ENCODE measurements at regions of chr11 and their contacts with region 1.

Region 1: DNA sequence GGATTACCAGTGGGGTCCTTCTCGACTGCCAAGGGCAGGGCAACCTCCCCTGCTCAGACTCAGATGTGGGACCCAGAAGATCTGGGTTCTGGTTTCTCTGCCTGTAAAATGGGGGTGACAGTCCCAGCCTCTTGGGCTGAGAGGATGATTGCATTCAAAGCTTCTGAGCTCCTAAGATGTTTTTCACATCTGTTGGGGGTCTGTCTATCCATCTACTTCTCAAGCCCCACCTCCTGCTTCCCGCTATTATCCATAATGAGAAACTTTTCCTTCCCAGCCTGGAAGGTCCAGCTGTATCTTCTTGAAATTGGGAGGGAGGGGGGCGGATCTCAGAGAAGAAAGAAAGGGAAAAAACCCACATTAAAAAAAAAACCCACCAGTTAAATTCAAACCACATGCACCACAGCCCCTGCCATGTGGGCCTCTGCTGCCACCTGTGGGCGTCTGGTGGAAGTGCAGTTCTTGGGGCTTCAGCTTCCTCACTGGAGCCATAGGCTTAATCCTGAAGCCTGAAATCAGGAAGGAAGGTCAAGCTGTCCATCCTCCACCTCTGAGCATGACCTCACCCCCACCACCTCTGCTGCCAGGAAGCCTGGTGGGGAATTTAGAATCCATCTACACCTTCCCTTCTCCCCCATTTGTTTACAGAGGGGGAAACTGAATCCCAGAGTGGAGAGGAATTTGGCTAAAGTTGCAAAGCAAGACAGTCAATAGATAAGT is 27.3 kb downstream of the ARHGEF17 start:
- DNase-seq: peak; percentile 81
- ATAC-seq: peak; percentile 83
- H3K4me3 Mint-ChIP-seq: no peak overlapping the region
- H3K27ac Mint-ChIP-seq: no peak overlapping the region
- H3K4me1 Mint-ChIP-seq: no peaks in the 10 kb centered on the region
- H3K27me3 Mint-ChIP-seq: no peaks in the 10 kb centered on the region
- CTCF ChIP-seq: peak; percentile 100

Region 2: GRCh38 chr11:73288873-73289707 is 46.3 kb before region 1 on chr11:
- CTCF ChIA-PET with region 1: interaction called, 35 read pairs
- POLR2A ChIA-PET with region 1: no interaction called
- intact Hi-C with region 1: no loop called
- DNase-seq: peak; percentile 70
- ATAC-seq: peak; percentile 92
- H3K4me3 Mint-ChIP-seq: no peak overlapping the region
- H3K27ac Mint-ChIP-seq: no peak overlapping the region
- H3K4me1 Mint-ChIP-seq: peaks cover 12% of the 10 kb centered on the region
- H3K27me3 Mint-ChIP-seq: no peaks in the 10 kb centered on the region
- CTCF ChIP-seq: peak; percentile 93

Region 3: GRCh38 chr11:73295231-73295995 is 40.0 kb before region 1 on chr11:
- CTCF ChIA-PET with region 1: interaction called, 35 read pairs
- POLR2A ChIA-PET with region 1: no interaction called
- intact Hi-C with region 1: loop called (anchors 5 kb)
- DNase-seq: peak; percentile 88
- ATAC-seq: peak; percentile 91
- H3K4me3 Mint-ChIP-seq: no peak overlapping the region
- H3K27ac Mint-ChIP-seq: no peak overlapping the region
- H3K4me1 Mint-ChIP-seq: peaks cover 2% of the 10 kb centered on the region
- H3K27me3 Mint-ChIP-seq: peaks cover 7% of the 10 kb centered on the region
- CTCF ChIP-seq: peak; percentile 86

Region 4: DNA sequence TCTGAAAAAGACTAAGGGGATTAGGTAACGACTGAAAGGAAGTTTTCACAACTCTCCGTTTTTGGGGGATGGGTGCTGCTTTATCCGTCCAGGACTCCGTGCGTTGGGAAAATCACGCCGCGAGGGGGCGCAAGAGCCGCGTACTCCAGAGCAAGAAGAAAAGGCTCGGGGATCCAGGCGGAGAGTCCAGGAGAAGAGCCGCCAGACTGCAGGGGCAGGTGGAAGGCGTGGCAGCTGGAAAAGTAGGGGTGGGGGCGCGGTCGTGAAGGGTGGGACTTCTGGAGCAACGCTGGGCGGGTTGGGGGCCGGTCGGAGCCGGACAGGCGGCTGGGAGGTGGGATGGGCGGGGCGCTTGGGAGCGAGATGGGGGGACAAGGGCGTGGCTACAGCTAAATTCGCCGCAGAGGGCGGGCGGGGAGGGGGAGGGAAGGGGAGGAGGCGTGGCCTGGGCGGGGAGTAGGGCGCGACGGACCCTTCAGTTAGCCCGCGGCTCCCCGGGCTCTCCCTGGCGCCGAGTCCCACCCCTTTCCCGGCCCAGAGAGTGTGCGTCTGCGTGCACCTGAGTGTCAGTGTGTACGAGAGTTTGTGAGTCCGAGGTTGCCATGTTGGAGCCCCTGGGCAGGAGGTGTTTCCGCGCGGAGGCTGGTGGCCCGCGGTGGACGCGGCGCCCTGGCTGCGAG is 27.9 kb before region 1 on chr11:
- CTCF ChIA-PET with region 1: interaction called, 123 read pairs
- POLR2A ChIA-PET with region 1: interaction called, 4 read pairs
- intact Hi-C with region 1: loop called (anchors 2 kb)
- DNase-seq: peak; percentile 97
- ATAC-seq: peak; percentile 81
- H3K4me3 Mint-ChIP-seq: peak overlapping the region; percentile 78
- H3K27ac Mint-ChIP-seq: no peak overlapping the region
- H3K4me1 Mint-ChIP-seq: peaks cover 6% of the 10 kb centered on the region
- H3K27me3 Mint-ChIP-seq: peaks cover 16% of the 10 kb centered on the region
- CTCF ChIP-seq: peak; percentile 62

Region 5: DNA sequence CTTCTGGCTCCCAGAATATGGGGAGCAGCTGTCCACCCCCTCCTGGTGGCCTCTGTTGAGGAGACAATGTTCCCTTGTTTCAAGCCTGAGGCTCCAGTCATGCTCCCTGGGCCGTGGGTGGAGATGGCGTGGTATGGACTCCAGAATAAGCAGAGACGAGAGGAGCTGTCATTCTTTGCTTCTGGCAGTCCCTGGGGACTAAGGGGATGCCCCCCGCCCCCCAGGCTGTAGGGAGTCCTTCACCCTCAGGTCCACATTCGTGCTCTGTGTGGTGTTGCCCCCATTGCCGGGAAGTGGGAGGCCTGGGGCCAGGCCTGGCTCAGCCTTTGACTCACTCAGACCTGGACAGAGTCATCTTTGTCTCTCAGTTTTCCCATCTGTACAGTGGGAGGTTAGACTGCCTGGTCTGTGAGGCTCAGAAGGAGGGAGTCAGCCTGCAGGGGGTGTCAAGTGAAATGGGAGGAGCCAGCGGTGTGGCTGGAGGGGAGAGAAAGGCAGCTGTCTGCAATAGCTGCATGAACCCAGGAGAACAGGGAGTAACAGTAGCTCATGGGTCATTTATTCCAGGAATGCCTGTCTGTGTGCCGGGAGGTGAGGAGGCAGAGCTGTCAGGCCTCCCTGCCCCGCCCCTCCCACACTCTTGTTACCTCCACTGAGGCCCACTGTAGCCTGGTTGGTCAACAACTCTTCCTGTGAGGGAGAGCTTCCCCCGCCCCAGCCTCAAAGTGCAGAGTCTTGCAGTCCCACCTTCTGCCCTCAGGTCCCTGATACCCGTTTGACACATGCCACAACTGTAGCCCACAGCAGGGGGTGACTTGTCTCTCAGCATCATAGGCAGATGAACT is 21.0 kb before region 1 on chr11:
- CTCF ChIA-PET with region 1: interaction called, 123 read pairs
- POLR2A ChIA-PET with region 1: interaction called, 3 read pairs
- intact Hi-C with region 1: no loop called
- DNase-seq: no peak
- ATAC-seq: peak; percentile 23
- H3K4me3 Mint-ChIP-seq: no peak overlapping the region
- H3K27ac Mint-ChIP-seq: no peak overlapping the region
- H3K4me1 Mint-ChIP-seq: no peaks in the 10 kb centered on the region
- H3K27me3 Mint-ChIP-seq: peaks cover 7% of the 10 kb centered on the region
- CTCF ChIP-seq: no peak

Region 6: DNA sequence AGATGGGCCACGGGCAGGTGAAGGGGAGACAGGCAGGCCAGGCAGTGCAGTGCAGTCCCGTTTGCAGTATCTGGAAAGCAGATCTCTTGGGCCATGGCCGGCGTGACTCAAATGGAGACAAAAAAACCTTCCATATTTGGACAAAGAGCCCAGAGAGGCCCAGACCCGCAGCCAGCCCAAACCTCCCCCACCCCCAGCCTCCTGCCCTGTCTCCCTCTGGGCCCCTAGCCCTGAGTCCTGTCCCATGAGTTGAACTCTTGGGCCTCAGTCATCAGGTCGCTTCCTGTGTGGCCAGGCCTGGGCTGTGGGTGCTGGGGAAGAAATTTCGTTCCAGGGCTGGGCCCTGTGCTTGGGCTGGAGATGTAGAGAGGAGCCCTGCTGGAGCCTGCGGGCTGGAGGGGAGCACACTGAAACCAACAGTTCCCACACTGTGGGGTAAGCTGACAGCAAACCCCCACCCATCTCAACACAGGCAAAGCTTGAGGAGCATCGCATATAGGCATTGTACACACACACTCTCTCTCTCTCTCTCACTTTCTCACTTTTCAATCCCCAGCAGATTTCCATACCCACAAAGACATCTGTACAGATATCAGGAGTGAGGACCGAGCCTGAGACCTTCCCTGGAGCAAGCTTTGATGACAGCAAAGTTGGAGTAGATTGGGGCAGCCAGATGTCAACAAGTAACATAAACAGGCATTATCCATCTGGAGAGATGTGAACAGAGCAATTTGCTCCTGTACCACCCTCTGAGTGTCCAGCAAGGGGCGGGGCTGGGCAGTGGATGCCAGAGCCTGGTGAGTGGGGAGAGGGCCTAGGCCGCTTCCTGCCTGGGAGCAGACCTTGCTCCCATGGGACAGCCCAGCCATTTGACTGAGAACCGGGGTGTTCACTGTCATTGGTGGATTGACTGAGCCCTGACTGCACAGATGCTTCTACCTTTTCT is 10.1 kb before region 1 on chr11:
- CTCF ChIA-PET with region 1: interaction called, 14 read pairs
- POLR2A ChIA-PET with region 1: no interaction called
- intact Hi-C with region 1: no loop called
- DNase-seq: no peak
- ATAC-seq: no peak
- H3K4me3 Mint-ChIP-seq: no peak overlapping the region
- H3K27ac Mint-ChIP-seq: no peak overlapping the region
- H3K4me1 Mint-ChIP-seq: peaks cover 12% of the 10 kb centered on the region
- H3K27me3 Mint-ChIP-seq: no peaks in the 10 kb centered on the region
- CTCF ChIP-seq: no peak

Region 7: GRCh38 chr11:73366265-73366610 is 30.9 kb after region 1 on chr11:
- CTCF ChIA-PET with region 1: interaction called, 10 read pairs
- POLR2A ChIA-PET with region 1: interaction called, 4 read pairs
- intact Hi-C with region 1: no loop called
- DNase-seq: peak; percentile 55
- ATAC-seq: peak; percentile 76
- H3K4me3 Mint-ChIP-seq: no peak overlapping the region
- H3K27ac Mint-ChIP-seq: peak overlapping the region; percentile 89
- H3K4me1 Mint-ChIP-seq: peaks cover 33% of the 10 kb centered on the region
- H3K27me3 Mint-ChIP-seq: no peaks in the 10 kb centered on the region
- CTCF ChIP-seq: no peak